Activated B cell treated with CpG ODN at 0.5 μM for 24 hours (primary cell): ENCODE measurements at regions of chr11 and their contacts with region 1.

Region 1: DNA sequence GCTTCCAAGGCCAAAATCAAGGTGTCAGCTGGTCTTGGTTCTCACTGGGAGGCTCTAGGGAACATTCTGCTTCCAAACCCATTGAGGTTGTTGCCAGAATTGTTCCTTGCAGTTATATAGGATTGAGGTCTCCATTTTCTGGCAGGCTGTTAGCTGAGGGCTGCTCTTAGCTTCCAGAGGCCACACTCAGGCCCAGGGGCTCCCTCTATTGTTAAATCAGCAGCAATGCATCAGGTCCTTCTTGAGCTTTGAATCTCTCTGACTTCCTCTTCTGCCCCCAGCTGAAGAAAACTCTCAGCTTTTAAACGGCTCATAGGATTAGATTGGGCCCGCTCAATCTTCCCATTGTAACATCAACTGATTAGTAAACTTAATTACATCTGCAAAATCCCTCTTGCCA is 39.3 kb upstream of the BSX start:
- DNase-seq: no peak
- ATAC-seq: peak; percentile 79
- H3K4me3 Mint-ChIP-seq: no peak overlapping the region
- H3K27ac Mint-ChIP-seq: no peak overlapping the region
- H3K4me1 Mint-ChIP-seq: peaks cover 10% of the 10 kb centered on the region
- H3K27me3 Mint-ChIP-seq: peaks cover 11% of the 10 kb centered on the region
- CTCF ChIP-seq: no peak

Region 2: GRCh38 chr11:122578168-122578825 is 442.7 kb before region 1 on chr11:
- CTCF ChIA-PET with region 1: no interaction called
- POLR2A ChIA-PET with region 1: no interaction called
- intact Hi-C with region 1: loop called (anchors 2 kb)
- DNase-seq: no peak
- ATAC-seq: no peak
- H3K4me3 Mint-ChIP-seq: no peak overlapping the region
- H3K27ac Mint-ChIP-seq: no peak overlapping the region
- H3K4me1 Mint-ChIP-seq: peaks cover 10% of the 10 kb centered on the region
- H3K27me3 Mint-ChIP-seq: peaks cover 4% of the 10 kb centered on the region
- CTCF ChIP-seq: no peak

Region 3: DNA sequence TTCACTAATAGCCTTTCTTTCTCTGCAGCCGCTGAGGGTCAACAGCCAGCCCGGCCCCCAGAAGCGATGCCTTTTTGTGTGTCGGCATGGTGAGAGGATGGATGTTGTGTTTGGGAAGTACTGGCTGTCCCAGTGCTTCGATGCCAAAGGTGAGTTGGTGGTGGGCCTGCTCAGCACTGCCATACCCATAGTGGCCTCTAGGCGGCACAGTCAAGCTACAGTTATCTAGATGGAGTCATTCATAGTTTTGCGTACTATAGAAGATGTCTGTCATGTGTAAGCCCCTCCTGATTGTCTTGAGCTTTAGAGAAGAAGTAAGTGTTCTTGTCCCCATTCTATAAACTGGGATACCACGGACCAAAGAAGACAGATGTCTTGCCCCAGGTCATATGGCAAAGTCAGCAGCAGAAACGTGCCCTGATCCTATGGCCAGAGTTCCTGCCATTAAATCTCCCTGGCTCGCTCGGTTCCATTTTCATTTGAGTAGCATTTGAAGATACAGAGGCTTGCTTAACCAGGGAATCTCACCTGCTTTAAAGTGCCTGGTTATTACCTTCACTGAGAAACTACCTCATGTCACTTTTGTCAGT is 224.7 kb before region 1 on chr11:
- CTCF ChIA-PET with region 1: interaction called, 14 read pairs
- POLR2A ChIA-PET with region 1: no interaction called
- intact Hi-C with region 1: loop called (anchors 1 kb)
- DNase-seq: peak; percentile 52
- ATAC-seq: peak; percentile 97
- H3K4me3 Mint-ChIP-seq: no peak overlapping the region
- H3K27ac Mint-ChIP-seq: no peak overlapping the region
- H3K4me1 Mint-ChIP-seq: peaks cover 4% of the 10 kb centered on the region
- H3K27me3 Mint-ChIP-seq: no peaks in the 10 kb centered on the region
- CTCF ChIP-seq: peak; percentile 39

Region 4: GRCh38 chr11:122863704-122864326 is 157.2 kb before region 1 on chr11:
- CTCF ChIA-PET with region 1: interaction called, 115 read pairs
- POLR2A ChIA-PET with region 1: no interaction called
- intact Hi-C with region 1: loop called (anchors 1 kb)
- DNase-seq: no peak
- ATAC-seq: no peak
- H3K4me3 Mint-ChIP-seq: no peak overlapping the region
- H3K27ac Mint-ChIP-seq: no peak overlapping the region
- H3K4me1 Mint-ChIP-seq: peaks cover 9% of the 10 kb centered on the region
- H3K27me3 Mint-ChIP-seq: peaks cover 33% of the 10 kb centered on the region
- CTCF ChIP-seq: peak; percentile 80

Region 5: DNA sequence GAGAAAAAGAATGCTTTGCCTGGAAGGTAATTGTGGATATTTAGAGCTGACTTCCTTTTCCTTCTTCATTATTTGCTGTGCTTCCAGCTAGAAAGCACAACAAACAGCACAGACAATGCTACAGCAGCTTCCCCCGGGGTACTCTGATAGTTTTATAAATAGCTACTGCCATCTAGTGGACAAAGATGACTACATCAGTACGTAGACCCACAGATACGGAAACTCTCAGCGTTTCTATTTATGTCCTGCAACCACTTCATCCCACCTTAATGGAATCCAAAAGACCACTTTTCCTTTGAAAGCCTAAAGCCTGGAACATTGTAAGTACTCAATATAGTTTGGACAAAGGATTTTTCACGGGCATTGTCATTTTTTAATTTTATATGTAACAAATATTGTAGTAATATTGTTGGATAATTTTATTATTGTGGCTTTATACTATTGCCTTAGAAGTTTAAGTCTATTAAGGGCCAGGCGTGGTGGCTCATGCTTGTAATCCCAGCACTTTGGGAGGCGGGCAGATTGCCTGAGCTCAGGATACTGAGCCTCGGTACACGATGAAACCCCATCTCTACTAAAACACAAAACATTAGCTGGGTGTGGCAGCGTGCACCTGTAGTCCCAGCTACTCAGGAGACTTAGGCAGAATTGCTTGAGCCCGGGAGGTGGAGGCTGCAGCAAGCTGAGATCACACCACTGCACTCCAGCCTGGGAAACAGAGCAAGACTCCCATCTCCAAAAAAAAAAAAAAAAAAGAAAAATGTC is 33.5 kb after region 1 on chr11:
- CTCF ChIA-PET with region 1: interaction called, 20 read pairs
- POLR2A ChIA-PET with region 1: interaction called, 8 read pairs
- intact Hi-C with region 1: loop called (anchors 1 kb)
- DNase-seq: no peak
- ATAC-seq: peak; percentile 87
- H3K4me3 Mint-ChIP-seq: no peak overlapping the region
- H3K27ac Mint-ChIP-seq: peak overlapping the region; percentile 61
- H3K4me1 Mint-ChIP-seq: peaks cover 54% of the 10 kb centered on the region
- H3K27me3 Mint-ChIP-seq: no peaks in the 10 kb centered on the region
- CTCF ChIP-seq: peak; percentile 35